K562 (cell line): ENCODE measurements at regions of chr4 and their contacts with region 1.

Region 1: DNA sequence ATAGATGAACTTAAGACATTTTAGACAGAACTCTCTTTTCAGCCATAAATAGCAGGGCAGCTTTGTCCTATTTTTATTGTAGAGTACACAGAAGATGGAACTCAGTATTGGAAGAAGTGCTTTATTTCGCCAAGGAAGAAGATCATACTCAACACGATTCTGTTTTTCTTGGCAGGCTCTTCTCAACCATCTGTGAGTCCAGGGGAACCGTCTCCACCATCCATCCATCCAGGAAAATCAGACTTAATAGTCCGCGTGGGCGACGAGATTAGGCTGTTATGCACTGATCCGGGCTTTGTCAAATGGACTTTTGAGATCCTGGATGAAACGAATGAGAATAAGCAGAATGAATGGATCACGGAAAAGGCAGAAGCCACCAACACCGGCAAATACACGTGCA is 37.6 kb downstream of the KIT start:
- DNase-seq: no peak
- ATAC-seq: no peak
- H3K4me3 ChIP-seq: no peak overlapping the region
- H3K27ac ChIP-seq: no peak overlapping the region
- H3K4me1 ChIP-seq: no peaks in the 10 kb centered on the region
- H3K27me3 ChIP-seq: peaks cover 5 to 17% of the 10 kb centered on the region in 2 experiments; a peak in 3 of 5 replicates
- CTCF ChIP-seq: no peak
- EP300 ChIP-seq: no peak
- POLR2A ChIP-seq: no peak
- RAD21 ChIP-seq: no peak

Region 2: GRCh38 chr4:54658252-54659093 is 36.9 kb before region 1 on chr4:
- CTCF ChIA-PET with region 1: no interaction called
- POLR2A ChIA-PET with region 1: no interaction called
- in situ Hi-C with region 1: no loop called
- intact Hi-C with region 1: no loop called
- DNase-seq: peak; percentile 55 to 76 (median 60)
- ATAC-seq: peak; percentile 93
- H3K4me3 ChIP-seq: peak overlapping the region; percentile 52
- H3K27ac ChIP-seq: no peak overlapping the region
- H3K4me1 ChIP-seq: peaks cover 5 to 23% of the 10 kb centered on the region in 2 experiments; a peak in 3 of 5 replicates
- H3K27me3 ChIP-seq: peaks cover 0 to 21% of the 10 kb centered on the region in 2 experiments; a peak in 4 of 5 replicates
- CTCF ChIP-seq: peak; percentile 44 to 75 (median 58); a peak in 5 of 6 replicates
- EP300 ChIP-seq: no peak
- POLR2A ChIP-seq: no peak
- RAD21 ChIP-seq: peak; percentile 29 to 38; a peak in 3 of 4 replicates

Region 3: GRCh38 chr4:54882616-54883015 is 187.3 kb after region 1 on chr4:
- CTCF ChIA-PET with region 1: no interaction called
- POLR2A ChIA-PET with region 1: no interaction called
- in situ Hi-C with region 1: no loop called
- intact Hi-C with region 1: no loop called
- DNase-seq: no peak
- ATAC-seq: no peak
- H3K4me3 ChIP-seq: no peak overlapping the region
- H3K27ac ChIP-seq: no peak overlapping the region
- H3K4me1 ChIP-seq: no peaks in the 10 kb centered on the region
- H3K27me3 ChIP-seq: no peaks in the 10 kb centered on the region
- CTCF ChIP-seq: no peak
- EP300 ChIP-seq: no peak
- POLR2A ChIP-seq: no peak
- RAD21 ChIP-seq: no peak

Region 4: GRCh38 chr4:54961357-54961975 is 266.1 kb after region 1 on chr4:
- CTCF ChIA-PET with region 1: no interaction called
- POLR2A ChIA-PET with region 1: no interaction called
- in situ Hi-C with region 1: loop called (anchors 10 kb)
- intact Hi-C with region 1: no loop called
- DNase-seq: peak; percentile 23 to 39 (median 30)
- ATAC-seq: peak; percentile 78
- H3K4me3 ChIP-seq: no peak overlapping the region
- H3K27ac ChIP-seq: no peak overlapping the region
- H3K4me1 ChIP-seq: no peaks in the 10 kb centered on the region
- H3K27me3 ChIP-seq: no peaks in the 10 kb centered on the region
- CTCF ChIP-seq: peak; percentile 39 to 66 (median 62); a peak in 5 of 6 replicates
- EP300 ChIP-seq: no peak
- POLR2A ChIP-seq: no peak
- RAD21 ChIP-seq: peak; percentile 68 to 69